ENCODE measurements at regions of chr1 and their contacts with region 1.

Region 1: DNA sequence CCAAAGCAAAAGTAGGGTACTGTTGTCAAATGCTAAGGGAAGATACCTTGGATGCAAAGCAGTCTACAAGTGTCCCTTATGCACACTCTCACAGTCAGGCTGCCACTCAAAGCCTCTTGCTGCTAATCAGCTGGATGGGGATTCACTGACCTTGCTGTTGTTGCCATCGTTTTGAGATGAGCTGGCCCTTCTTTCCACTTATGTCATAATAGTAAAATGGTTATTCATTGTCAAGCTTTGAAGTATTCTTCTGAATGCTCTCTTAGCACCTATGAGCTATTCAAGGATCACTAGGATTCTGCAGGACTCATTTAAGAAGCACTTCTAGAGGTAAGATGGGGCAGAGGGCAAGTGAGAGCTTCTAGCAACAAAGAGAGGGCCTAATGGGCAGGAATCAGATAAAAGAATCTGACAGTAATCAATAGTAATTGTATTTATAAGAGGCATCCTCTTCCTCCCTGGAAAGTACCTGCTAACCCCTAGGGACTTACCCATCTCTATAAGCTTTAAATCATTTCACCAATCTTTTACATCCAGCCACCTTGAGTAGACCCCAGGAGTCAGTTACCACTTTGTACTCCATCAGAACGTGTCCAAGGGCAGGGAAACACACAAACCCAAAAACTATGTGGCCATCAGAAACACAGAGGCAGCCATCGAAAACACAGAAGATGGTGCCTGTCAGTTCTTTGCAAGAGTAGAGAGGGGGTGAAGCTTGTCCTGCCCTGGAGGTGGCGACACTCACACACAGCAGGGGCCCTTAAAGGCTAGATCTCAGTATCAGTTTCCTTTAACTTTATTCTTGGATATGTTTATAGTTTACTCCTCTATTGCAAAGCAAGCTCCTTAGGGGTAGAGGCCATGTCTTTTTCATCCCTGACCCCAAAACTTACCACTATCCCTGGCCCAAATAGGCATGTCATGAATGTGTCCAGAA is 103.7 kb upstream of the NFIA start:
- DNase-seq: peak; percentile 15 to 39
- ATAC-seq: peak; percentile 82 to 88
- H3K4me3 ChIP-seq: no peak overlapping the region
- H3K27ac ChIP-seq: no peak overlapping the region
- H3K4me1 ChIP-seq: no peaks in the 10 kb centered on the region
- H3K27me3 ChIP-seq: no peaks in the 10 kb centered on the region
- CTCF ChIP-seq: peak in 4 of 5 experiments; percentile 26 to 55 (median 42)
- POLR2A ChIP-seq: no peak

Region 2: DNA sequence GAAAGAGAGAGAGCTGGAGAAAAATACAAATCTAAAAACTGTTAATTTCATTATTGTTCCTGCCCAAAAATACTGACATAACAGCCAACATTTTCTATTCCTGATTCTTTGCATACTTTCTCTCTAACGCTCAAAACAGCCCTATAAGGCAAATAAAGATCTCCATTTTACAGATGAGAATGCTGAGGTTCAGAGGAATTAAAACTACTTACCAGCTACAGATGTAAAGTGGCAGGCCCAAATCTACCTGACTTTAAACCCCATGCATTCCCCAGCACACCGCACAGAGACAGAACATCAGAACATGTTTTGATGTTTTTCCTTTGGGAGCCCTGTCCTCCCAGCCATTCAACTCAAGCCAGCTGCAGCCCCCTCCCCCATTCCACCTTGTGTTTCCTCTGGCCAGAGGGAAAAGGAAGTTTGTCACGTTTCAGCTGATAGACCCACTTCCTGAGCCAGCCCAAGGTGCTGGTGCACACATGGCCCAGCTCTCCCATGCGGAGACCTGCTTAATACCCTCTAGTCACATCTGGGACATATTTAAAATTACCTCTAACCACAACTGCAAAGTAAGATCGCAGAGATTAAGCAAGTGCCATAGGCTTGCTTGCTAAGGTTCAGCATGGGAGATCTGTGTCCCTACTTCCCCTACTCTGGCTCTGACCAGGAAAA is 29.4 kb before region 1 on chr1:
- in situ Hi-C with region 1: no loop called
- intact Hi-C with region 1: no loop called
- DNase-seq: no peak
- ATAC-seq: no peak
- H3K4me3 ChIP-seq: no peak overlapping the region
- H3K27ac ChIP-seq: peak overlapping the region in 1 of 4 donors; percentile 52
- H3K4me1 ChIP-seq: peaks cover 18 to 23% of the 10 kb centered on the region in 2 donors
- H3K27me3 ChIP-seq: no peaks in the 10 kb centered on the region
- CTCF ChIP-seq: no peak
- POLR2A ChIP-seq: no peak

Region 3: DNA sequence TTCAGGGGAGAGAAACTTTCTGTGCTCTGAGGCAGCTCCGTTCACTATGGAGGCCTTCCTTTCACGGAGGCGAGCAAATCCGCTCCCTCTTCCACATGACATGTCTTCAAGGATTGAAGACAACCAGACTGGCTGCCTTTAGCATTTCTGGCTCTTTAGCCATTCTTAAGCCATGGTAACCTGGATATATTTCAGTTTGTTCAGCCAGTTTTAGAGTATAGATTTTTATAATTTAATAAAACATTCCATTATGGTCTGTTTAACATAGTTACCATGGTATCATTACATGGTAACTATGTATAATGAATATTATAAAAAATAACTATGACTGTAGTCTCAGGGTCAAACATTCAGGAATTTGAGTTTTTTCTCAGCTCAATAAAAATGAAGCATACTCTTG is 49.4 kb after region 1 on chr1:
- in situ Hi-C with region 1: loop called in 2 of 4 experiments (anchors 5 to 10 kb)
- intact Hi-C with region 1: no loop called
- DNase-seq: no peak
- ATAC-seq: no peak
- H3K4me3 ChIP-seq: no peak overlapping the region
- H3K27ac ChIP-seq: no peak overlapping the region
- H3K4me1 ChIP-seq: no peaks in the 10 kb centered on the region
- H3K27me3 ChIP-seq: no peaks in the 10 kb centered on the region
- CTCF ChIP-seq: no peak
- POLR2A ChIP-seq: no peak

Region 4: DNA sequence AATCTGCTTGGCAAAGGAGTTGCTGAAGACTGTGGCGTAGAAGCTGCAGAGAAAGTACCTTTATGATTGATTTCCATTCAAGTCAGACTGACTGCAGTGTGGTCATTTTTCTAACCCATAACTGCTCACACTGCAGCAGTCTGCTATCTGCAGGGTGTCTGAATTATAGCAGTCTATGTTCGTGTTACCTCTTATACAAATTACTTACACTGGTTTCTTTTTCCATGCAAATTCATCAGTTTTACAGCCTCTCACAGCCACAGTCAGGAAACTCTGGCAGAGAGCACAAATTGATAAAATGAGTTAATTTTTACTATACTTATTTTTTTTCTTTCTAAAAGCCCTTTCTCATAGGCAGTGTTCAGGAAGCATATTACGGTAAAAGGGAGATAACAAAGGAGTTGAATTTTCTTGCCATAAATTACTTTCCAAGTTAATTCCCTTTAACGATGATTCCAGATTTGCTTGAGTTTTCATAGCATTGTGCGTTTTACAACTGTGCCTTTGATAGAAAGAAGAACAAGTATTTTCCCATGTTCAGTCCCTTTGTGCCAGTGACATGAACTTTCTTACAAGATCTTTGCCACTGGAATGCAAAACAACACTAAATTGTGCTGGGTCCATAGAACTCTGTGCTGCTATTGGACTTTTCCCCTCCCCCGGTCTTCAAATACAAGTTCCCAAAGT is 365.2 kb after region 1 on chr1:
- in situ Hi-C with region 1: loop called in 1 of 4 experiments (anchors 10 kb)
- intact Hi-C with region 1: no loop called
- DNase-seq: no peak
- ATAC-seq: no peak
- H3K4me3 ChIP-seq: no peak overlapping the region
- H3K27ac ChIP-seq: no peak overlapping the region
- H3K4me1 ChIP-seq: peaks cover 24 to 32% of the 10 kb centered on the region in 2 donors
- H3K27me3 ChIP-seq: no peaks in the 10 kb centered on the region
- CTCF ChIP-seq: no peak
- POLR2A ChIP-seq: no peak

Region 5: GRCh38 chr1:61588736-61589672 is 610.3 kb after region 1 on chr1:
- in situ Hi-C with region 1: no loop called
- intact Hi-C with region 1: loop called (anchors 10 kb)
- DNase-seq: peak in 1 of 2 donors; percentile 24
- ATAC-seq: peak; percentile 47 to 65
- H3K4me3 ChIP-seq: no peak overlapping the region
- H3K27ac ChIP-seq: no peak overlapping the region
- H3K4me1 ChIP-seq: no peaks in the 10 kb centered on the region
- H3K27me3 ChIP-seq: no peaks in the 10 kb centered on the region
- CTCF ChIP-seq: peak; percentile 47 to 72 (median 58)
- POLR2A ChIP-seq: no peak

Region 6: GRCh38 chr1:61842871-61843514 is 864.3 kb after region 1 on chr1:
- in situ Hi-C with region 1: loop called in 2 of 4 experiments (anchors 10 kb)
- intact Hi-C with region 1: no loop called
- DNase-seq: no peak
- ATAC-seq: no peak
- H3K4me3 ChIP-seq: no peak overlapping the region
- H3K27ac ChIP-seq: no peak overlapping the region
- H3K4me1 ChIP-seq: peaks cover 12 to 15% of the 10 kb centered on the region in 2 donors
- H3K27me3 ChIP-seq: no peaks in the 10 kb centered on the region
- CTCF ChIP-seq: no peak
- POLR2A ChIP-seq: no peak

Measured in gastrocnemius medialis (tissue), 4 donors.